ENCODE measurements at regions of chr12 and their contacts with region 1.

Region 1: DNA sequence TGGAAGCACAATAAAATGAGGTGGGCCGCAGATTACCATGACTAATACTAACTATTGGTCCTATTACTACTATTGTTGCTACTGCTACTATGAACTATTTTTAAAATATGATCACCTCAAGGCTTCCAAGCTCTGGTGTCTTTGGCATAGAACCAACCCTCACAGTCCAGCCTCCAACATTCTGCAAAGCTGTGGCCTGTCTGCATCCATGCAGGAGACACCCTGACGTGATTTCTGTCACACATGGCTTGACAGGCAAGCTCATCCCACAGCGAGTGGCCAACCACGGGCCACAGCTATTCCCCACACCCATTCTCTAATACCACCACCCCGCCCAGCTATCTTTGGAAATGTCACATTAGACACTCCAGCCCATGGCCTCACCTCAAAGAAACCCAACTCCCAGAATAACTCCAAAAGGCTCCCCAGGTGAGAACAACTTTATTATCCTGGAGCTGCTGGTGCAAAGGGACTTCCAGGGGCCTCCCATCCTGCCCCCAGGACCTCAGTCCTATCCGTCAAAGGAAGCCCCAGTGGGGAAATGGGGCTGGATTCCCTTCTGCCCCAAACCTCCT is 14.4 kb downstream of the ISCU start:
- DNase-seq: no peak
- H3K4me3 ChIP-seq: no peak overlapping the region
- H3K27ac ChIP-seq: no peak overlapping the region
- H3K4me1 ChIP-seq: no peaks in the 10 kb centered on the region
- H3K27me3 ChIP-seq: no peaks in the 10 kb centered on the region

Region 2: GRCh38 chr12:108547686-108548085 is 29.1 kb before region 1 on chr12:
- CTCF ChIA-PET with region 1: no interaction called
- POLR2A ChIA-PET with region 1: no interaction called
- DNase-seq: no peak
- H3K4me3 ChIP-seq: no peak overlapping the region
- H3K27ac ChIP-seq: no peak overlapping the region
- H3K4me1 ChIP-seq: peaks cover 0 to 10% (median 4%) of the 10 kb centered on the region in 4 experiments
- H3K27me3 ChIP-seq: no peaks in the 10 kb centered on the region

Region 3: DNA sequence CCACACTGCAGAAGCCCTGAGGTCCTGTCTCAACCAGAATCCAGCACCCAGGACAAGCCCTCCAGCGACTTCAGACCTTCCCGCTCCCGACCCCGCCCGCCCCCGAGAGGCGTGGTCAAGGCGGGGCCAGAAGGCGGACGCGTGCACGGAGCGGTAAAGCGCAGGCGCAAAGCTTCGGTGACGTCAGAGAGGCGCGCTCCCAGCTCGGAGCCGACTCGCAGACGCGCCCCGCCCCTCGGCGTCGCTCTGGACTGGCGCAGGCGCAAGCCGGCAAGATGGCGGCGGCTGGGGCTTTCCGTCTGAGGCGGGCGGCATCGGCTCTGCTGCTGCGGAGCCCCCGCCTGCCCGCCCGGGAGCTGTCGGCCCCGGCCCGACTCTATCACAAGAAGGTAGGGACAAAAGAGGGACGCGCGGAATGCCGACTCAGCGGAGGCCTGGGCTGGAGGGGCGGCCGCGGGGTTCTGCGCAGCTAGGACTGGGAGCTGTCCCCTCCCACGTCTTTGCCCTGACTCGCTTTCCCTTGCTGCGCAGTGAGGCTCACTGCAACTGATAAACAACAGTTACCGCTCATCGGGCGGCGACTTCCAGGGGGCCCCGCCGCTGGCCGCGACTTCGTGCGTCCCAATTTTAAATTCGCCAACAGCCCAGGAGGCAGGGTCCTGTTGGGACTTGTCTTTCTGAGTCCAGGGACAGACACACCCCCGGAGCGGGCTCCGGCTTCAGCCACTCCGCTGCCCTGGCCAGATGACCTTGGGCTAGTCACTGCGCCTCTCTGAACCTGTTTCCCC is 14.2 kb before region 1 on chr12 and contains the start of gene ISCU:
- CTCF ChIA-PET with region 1: interaction called, 17 read pairs
- POLR2A ChIA-PET with region 1: no interaction called
- DNase-seq: peak; percentile 96 to 98 (median 97)
- H3K4me3 ChIP-seq: peak within 1 kb of the TSS; percentile 90 to 100 (median 99)
- H3K27ac ChIP-seq: peak within 1 kb of the TSS; percentile 96 to 99
- H3K4me1 ChIP-seq: peaks cover 41 to 79% (median 66%) of the 10 kb centered on the region in 4 experiments
- H3K27me3 ChIP-seq: no peaks in the 10 kb centered on the region

Region 4: GRCh38 chr12:108671110-108671509 is 94.4 kb after region 1 on chr12:
- CTCF ChIA-PET with region 1: no interaction called
- POLR2A ChIA-PET with region 1: no interaction called
- DNase-seq: no peak
- H3K4me3 ChIP-seq: no peak overlapping the region
- H3K27ac ChIP-seq: peak overlapping the region in 1 of 2 experiments; percentile 28
- H3K4me1 ChIP-seq: peaks cover 11 to 23% (median 19%) of the 10 kb centered on the region in 4 experiments
- H3K27me3 ChIP-seq: no peaks in the 10 kb centered on the region

Region 5: DNA sequence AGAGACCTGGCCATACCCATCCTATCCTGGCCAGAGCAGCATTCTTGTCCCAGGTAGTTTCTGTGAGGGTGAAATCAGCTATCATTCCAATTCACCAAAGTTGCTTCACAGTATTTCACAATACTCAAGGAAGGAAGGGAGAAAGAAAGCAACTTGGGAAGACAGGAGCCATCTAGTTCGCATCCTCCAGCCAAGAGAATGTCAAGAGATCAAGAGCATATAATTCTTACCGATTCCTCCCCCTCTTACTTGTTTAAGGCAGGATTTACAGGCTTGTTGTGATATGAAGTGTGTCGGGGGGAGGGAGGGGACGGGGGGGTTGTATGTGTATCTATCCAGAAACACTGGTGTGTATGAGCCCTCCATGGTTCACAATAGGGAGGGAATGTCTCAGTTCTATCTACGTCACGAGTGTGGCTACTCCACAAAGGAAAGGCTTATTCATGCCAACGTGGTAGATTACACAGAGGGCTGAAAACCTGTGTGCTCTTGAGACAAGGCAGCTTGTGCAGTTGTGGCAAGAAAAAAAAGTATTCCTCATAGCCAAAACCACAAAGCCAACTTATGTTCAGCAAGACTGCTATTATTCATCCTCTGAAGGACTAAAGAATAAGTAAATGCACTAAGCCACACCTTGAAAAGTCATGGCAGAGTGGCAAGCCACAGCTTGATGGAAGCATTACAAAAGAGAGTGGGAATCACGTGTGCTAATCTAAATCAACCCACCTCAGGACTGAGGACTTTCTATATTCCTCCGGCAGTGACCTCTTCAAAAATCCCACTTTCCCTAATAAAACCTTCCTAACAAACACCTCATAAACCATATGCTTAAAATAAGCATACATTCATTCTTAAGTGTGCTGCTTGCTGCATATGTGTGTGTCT is 119.6 kb after region 1 on chr12:
- CTCF ChIA-PET with region 1: no interaction called
- POLR2A ChIA-PET with region 1: no interaction called
- DNase-seq: peak; percentile 93 to 99 (median 98)
- H3K4me3 ChIP-seq: peak overlapping the region in 4 of 7 experiments; percentile 14 to 58 (median 30)
- H3K27ac ChIP-seq: peak overlapping the region; percentile 82 to 88
- H3K4me1 ChIP-seq: peaks cover 48 to 90% (median 82%) of the 10 kb centered on the region in 4 experiments
- H3K27me3 ChIP-seq: no peaks in the 10 kb centered on the region